ENCODE measurements at regions of chr12 and their contacts with region 1.

Region 1: GRCh38 chr12:42129595-42130204 is 15.0 kb downstream of the GXYLT1 start:
- DNase-seq: no peak
- ATAC-seq: peak; percentile 89
- H3K4me3 ChIP-seq: no peak overlapping the region
- H3K27ac ChIP-seq: no peak overlapping the region
- H3K4me1 ChIP-seq: peaks cover 6% of the 10 kb centered on the region
- H3K27me3 ChIP-seq: no peaks in the 10 kb centered on the region
- CTCF ChIP-seq: peak; percentile 91

Region 2: DNA sequence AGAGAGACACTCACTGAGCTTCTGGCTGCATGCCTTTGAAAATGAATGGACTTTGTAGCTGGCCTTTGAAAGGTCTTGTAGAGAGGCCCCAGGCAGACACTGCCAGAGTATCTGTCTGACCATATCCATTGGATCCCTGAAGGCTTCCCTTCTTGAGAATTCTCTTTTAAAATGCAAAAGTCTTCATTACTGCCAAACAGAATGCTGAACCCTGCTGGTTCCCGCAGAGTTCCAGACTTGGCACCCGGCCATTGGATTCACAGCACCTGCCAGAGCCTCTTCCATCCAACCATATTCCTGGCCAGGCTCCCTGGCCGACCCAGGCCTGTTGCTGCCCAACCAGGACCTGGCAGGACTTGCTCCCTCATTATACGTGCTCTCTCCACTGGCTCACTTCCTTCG is 167.5 kb before region 1 on chr12:
- intact Hi-C with region 1: no loop called
- DNase-seq: no peak
- ATAC-seq: no peak
- H3K4me3 ChIP-seq: no peak overlapping the region
- H3K27ac ChIP-seq: no peak overlapping the region
- H3K4me1 ChIP-seq: no peaks in the 10 kb centered on the region
- H3K27me3 ChIP-seq: no peaks in the 10 kb centered on the region
- CTCF ChIP-seq: no peak

Region 3: DNA sequence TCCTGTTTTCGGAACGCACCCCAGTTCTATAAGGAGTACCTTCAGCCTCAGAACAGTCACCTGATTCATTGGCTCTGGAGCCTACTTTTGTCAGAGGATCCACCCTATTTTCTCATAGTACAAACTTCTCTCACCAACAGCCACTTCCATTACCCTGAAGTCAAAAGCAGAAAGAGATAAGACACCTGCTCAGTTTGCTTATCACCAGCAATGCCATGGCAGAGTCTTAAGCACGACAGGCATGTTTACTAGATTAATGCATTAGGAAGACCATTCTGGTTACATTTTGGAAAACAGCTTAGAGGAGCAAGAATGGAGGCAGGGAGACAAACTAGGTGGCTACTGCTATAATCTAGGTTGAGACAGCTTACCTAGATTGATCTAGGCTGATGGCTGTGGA is 52.7 kb before region 1 on chr12:
- intact Hi-C with region 1: no loop called
- DNase-seq: no peak
- ATAC-seq: no peak
- H3K4me3 ChIP-seq: no peak overlapping the region
- H3K27ac ChIP-seq: no peak overlapping the region
- H3K4me1 ChIP-seq: no peaks in the 10 kb centered on the region
- H3K27me3 ChIP-seq: no peaks in the 10 kb centered on the region
- CTCF ChIP-seq: no peak

Region 4: GRCh38 chr12:42094277-42094676 is 35.4 kb before region 1 on chr12:
- intact Hi-C with region 1: no loop called
- DNase-seq: no peak
- ATAC-seq: no peak
- H3K4me3 ChIP-seq: no peak overlapping the region
- H3K27ac ChIP-seq: no peak overlapping the region
- H3K4me1 ChIP-seq: no peaks in the 10 kb centered on the region
- H3K27me3 ChIP-seq: no peaks in the 10 kb centered on the region
- CTCF ChIP-seq: no peak

Region 5: GRCh38 chr12:42261708-42262107 is 132.0 kb after region 1 on chr12:
- intact Hi-C with region 1: no loop called
- DNase-seq: no peak
- ATAC-seq: no peak
- H3K4me3 ChIP-seq: no peak overlapping the region
- H3K27ac ChIP-seq: no peak overlapping the region
- H3K4me1 ChIP-seq: no peaks in the 10 kb centered on the region
- H3K27me3 ChIP-seq: no peaks in the 10 kb centered on the region
- CTCF ChIP-seq: no peak

Region 6: DNA sequence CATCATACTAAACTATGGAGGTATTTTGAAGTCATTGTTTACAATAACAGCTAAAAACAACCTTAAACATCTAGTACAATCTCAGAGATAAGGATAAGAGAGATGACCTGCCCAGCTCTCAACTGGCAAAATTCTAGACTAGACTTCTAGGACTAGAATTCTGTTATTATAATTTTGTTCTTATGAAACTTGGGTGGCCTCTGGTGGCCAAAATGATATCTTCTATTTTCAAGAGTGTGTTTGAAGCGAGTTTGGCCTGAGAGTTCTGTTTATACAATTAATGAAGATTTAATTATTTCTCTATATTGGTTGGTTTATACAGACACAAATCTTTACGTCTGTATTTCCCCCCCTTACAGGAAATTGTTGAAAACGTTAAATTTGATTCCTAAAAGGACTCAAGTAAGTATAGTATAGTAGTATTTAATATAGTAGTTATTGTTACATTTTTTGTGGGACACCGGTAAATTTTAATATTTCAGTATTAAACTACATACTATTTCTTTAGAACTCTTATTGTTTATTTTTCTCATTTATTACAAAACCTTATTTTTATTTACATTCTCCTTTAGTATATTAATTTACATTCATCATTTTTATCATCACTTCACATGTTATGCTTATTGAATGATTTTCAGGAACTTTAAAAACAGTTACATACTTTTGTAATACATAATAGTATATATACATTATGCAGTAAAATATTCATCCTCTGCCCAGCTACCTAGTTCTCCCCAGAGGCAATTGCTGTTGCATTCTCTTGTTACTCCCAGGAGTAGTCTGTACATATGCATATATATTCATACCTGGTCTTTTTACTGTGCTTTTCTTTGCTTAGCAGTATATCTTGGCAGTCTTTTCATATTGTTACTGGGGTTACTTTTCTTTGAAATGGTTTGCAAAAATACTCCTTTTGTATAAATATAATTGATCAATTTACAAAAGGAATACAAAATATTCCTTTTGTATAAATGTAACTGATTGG is 202.9 kb after region 1 on chr12:
- intact Hi-C with region 1: loop called (anchors 10 kb)
- DNase-seq: no peak
- ATAC-seq: peak; percentile 50
- H3K4me3 ChIP-seq: no peak overlapping the region
- H3K27ac ChIP-seq: no peak overlapping the region
- H3K4me1 ChIP-seq: peaks cover 19% of the 10 kb centered on the region
- H3K27me3 ChIP-seq: no peaks in the 10 kb centered on the region
- CTCF ChIP-seq: peak; percentile 71